ENCODE measurements at regions of chr3 and their contacts with region 1.

Region 1: GRCh38 chr3:49133226-49133951 is 539 bp upstream of the LAMB2 start:
- DNase-seq: peak; percentile 87
- H3K4me3 Mint-ChIP-seq: peak overlapping the region; percentile 90
- H3K27ac Mint-ChIP-seq: peak overlapping the region; percentile 84
- H3K4me1 Mint-ChIP-seq: peaks cover 16% of the 10 kb centered on the region
- H3K27me3 Mint-ChIP-seq: no peaks in the 10 kb centered on the region
- CTCF ChIP-seq: no peak

Region 2: DNA sequence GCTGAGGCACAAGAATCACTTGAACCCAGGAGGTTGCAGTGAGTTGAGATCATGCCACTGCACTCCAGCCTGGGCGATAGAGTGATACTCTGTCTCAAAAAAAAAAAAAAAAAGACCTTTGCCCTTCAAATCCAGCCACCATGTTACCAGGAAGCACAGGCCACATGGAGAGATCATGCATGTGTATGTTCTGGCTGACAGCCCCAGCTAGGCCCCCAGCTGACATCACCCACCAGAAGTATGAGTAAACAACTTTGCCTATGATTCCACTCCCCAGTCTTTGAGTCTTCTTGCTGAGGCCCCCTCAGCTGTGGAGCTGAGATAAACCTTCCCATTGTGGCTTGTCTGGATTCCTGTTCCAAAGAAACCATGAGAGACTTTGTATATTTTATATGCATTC is 218.1 kb before region 1 on chr3:
- CTCF ChIA-PET with region 1: no interaction called
- POLR2A ChIA-PET with region 1: no interaction called
- intact Hi-C with region 1: no loop called
- DNase-seq: no peak
- H3K4me3 Mint-ChIP-seq: no peak overlapping the region
- H3K27ac Mint-ChIP-seq: no peak overlapping the region
- H3K4me1 Mint-ChIP-seq: no peaks in the 10 kb centered on the region
- H3K27me3 Mint-ChIP-seq: no peaks in the 10 kb centered on the region
- CTCF ChIP-seq: no peak

Region 3: DNA sequence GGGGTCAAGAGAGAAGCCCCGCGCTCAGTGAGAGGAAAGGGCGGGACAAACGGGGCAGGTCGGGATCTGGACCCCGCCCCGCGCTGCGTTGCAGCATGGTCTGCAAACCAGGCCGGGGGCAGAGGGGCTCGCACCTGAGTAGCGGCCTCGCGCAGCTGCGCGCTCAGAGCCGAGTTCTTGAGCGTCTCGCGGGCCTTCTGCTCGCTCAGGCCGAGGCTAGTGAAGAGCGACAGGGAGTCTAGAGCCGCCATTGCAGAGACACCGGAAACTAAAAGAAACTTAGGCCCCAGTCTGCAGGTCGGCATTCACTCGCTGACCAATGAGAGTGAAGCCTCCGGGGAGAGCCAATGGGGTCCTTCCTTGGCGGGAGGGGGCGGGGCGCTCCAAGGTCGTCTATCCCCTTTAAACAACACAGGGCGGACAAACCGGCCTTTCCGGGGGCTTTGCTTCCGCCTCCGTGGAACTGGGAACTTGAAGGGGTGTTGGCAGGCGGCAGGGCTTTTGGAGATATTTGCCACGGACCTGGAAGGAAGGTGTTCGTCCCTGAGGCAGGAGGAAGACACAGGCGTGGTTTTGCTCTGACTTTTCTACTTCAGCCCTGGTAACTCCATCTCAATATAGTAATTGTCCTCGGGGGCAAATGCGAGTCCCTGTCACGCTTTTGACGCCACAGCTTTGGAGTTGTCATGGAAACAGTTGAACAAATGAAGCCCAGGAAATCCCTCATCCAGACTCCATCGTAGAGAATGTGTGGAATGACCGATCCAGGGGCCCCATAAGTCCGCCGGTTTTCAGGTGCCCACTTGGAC is 28.7 kb before region 1 on chr3 and contains the start of gene QARS1:
- CTCF ChIA-PET with region 1: no interaction called
- POLR2A ChIA-PET with region 1: interaction called, 29 read pairs
- intact Hi-C with region 1: no loop called
- DNase-seq: peak; percentile 93
- H3K4me3 Mint-ChIP-seq: peak within 1 kb of the TSS; percentile 98
- H3K27ac Mint-ChIP-seq: peak within 1 kb of the TSS; percentile 90
- H3K4me1 Mint-ChIP-seq: peaks cover 12% of the 10 kb centered on the region
- H3K27me3 Mint-ChIP-seq: no peaks in the 10 kb centered on the region
- CTCF ChIP-seq: no peak
- total RNA-seq, gene QARS1: 114 and 149 TPM in 2 replicates

Region 4: DNA sequence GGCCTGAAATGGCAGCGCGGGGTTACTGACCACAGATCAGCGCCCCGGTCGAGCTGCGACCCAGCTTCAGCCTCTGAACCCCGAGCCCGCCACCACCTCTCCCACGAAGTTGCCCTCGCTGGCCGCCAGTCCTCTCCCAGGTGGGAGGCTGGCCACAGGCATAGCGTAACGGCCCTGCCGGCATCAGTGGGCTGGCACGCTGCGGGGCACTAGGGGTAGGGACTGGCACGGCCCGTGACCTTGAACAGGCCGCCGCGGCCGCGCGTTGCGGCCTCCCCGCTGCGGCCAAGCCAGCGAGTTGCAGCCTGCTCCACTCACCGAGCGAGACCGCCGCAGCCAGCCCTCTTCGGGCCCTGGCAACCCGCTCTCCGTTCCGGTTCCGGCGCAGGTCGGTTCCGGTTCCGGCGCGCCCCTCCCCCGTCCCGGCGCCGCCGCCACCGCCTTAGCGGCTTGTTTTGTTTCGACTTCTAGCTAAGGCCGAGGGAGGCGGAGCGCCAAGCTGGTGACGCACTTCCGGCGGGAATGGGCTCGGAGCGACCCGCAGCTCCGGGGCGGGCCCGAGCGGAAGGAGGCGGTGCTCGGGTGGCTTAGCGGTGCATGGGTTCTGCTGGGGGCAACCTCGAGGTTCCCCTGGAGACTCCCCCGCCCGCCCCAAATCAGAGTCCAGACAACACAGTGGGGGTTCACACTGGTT is 12.8 kb before region 1 on chr3 and contains the start of gene USP19:
- CTCF ChIA-PET with region 1: interaction called, 3 read pairs
- POLR2A ChIA-PET with region 1: interaction called, 64 read pairs
- intact Hi-C with region 1: loop called (anchors 1 kb)
- DNase-seq: peak; percentile 92
- H3K4me3 Mint-ChIP-seq: peak within 1 kb of the TSS; percentile 75
- H3K27ac Mint-ChIP-seq: peak within 1 kb of the TSS; percentile 79
- H3K4me1 Mint-ChIP-seq: peaks cover 6% of the 10 kb centered on the region
- H3K27me3 Mint-ChIP-seq: no peaks in the 10 kb centered on the region
- CTCF ChIP-seq: no peak
- total RNA-seq, gene USP19: 39.3 and 51.4 TPM in 2 replicates

Region 5: GRCh38 chr3:49165771-49166751 is 32.7 kb after region 1 on chr3 and contains the start of gene CCDC71:
- CTCF ChIA-PET with region 1: interaction called, 4 read pairs
- POLR2A ChIA-PET with region 1: interaction called, 15 read pairs
- intact Hi-C with region 1: no loop called
- DNase-seq: peak; percentile 63
- H3K4me3 Mint-ChIP-seq: peak within 1 kb of the TSS; percentile 84
- H3K27ac Mint-ChIP-seq: peak within 1 kb of the TSS; percentile 85
- H3K4me1 Mint-ChIP-seq: peaks cover 15% of the 10 kb centered on the region
- H3K27me3 Mint-ChIP-seq: no peaks in the 10 kb centered on the region
- CTCF ChIP-seq: no peak
- total RNA-seq, gene CCDC71: 25.7 and 26.0 TPM in 2 replicates